ENCODE measurements at regions of chrX and their contacts with region 1.

Region 1: DNA sequence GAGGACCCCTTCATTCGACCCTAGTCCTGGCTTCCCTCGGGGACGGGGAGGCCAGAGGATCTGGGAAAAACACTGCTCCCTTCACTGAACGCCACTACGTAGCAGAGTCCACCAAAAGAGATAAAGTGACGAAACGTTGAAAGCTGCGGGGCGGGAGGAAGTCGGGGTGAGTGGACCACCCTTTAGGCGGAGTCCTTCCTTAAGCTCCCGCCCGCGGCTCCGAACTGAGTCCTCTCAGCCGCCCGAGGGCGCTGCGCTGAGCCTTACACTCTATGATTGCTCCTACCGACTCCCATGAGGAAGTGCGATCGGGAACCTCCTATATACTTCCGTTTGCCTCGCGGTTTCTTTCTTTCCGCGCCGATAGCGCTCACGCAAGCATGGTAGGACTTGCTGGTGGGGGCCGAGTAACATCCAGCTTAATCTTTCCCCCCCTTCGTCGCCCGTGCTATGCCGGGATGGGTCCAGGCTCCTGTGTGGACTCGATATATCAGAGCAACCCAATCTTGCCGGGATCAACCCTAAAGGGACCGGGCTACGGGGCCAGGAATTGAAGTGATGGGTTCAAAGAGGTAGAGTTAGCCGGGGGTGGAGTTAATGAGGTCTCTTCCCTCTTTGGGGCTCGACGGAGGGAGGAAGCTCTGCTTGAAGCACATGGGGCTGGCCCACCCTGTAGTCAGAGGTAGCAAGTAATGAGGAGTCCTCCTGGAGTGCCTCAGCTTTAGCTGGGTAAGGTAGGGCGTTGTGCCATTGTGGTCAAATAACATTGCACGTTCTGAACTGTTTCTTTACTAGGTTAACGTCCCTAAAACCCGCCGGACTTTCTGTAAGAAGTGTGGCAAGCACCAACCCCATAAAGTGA is at the start of gene RPL36A:
- DNase-seq: peak; percentile 81
- ATAC-seq: peak; percentile 98
- H3K4me3 ChIP-seq: peak within 1 kb of the TSS; percentile 68 to 84
- H3K27ac ChIP-seq: peak within 1 kb of the TSS; percentile 98
- H3K4me1 ChIP-seq: peaks cover 14% of the 10 kb centered on the region
- H3K27me3 ChIP-seq: no peaks in the 10 kb centered on the region
- CTCF ChIP-seq: peak; percentile 93
- total RNA-seq, gene RPL36A: 308 TPM

Region 2: DNA sequence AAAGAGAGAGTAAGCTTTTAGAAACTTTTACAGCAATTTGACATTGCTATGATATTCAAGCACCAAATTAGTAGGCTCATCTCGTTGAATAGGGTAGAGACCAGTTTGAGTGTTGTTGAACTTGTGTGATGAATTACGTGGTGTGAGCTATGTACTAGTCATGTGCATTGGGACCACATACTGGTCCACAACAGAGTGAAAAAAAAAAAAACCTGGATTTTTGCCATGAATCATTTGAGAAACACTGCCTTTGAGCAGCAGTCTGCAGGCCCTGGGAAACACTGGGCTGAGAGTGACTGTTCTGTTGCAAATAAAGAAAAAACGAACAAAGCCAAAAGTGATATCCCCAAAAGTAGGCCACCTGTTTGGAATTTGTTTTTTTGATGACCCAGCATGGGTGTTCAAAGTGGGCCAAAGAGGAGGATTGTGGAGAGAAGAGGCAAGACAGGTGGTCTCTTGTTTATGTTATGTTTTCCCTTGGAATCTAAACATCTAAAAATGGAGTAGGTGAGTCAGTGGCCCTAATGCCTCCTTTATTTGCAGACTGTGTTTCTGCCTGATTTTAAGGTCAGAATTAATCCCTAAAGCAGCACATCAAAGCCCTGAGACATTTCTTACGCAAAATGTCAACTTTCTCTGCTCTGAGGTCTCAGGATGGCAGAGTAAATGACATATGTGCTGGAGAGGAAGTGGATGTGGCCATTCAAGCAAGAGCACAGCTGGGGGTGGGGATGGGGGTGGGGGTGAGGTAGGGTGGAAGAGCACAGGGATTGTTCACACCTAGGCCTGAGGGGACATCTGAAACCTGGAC is 133.2 kb before region 1 on chrX:
- CTCF ChIA-PET with region 1: no interaction called
- POLR2A ChIA-PET with region 1: no interaction called
- in situ Hi-C with region 1: no loop called
- intact Hi-C with region 1: no loop called
- DNase-seq: no peak
- ATAC-seq: no peak
- H3K4me3 ChIP-seq: no peak overlapping the region
- H3K27ac ChIP-seq: no peak overlapping the region
- H3K4me1 ChIP-seq: no peaks in the 10 kb centered on the region
- H3K27me3 ChIP-seq: no peaks in the 10 kb centered on the region
- CTCF ChIP-seq: no peak

Region 3: GRCh38 chrX:101290789-101291607 is 99.9 kb before region 1 on chrX and contains the start of gene TAF7L:
- CTCF ChIA-PET with region 1: no interaction called
- POLR2A ChIA-PET with region 1: no interaction called
- in situ Hi-C with region 1: no loop called
- intact Hi-C with region 1: no loop called
- DNase-seq: no peak
- ATAC-seq: no peak
- H3K4me3 ChIP-seq: no peak within 1 kb of the TSS
- H3K27ac ChIP-seq: no peak within 1 kb of the TSS
- H3K4me1 ChIP-seq: no peaks in the 10 kb centered on the region
- H3K27me3 ChIP-seq: 0 out of 2 replicates have a peak, but pooled peaks cover 2% of the 10 kb centered on the region
- CTCF ChIP-seq: no peak
- total RNA-seq, gene TAF7L: 0.18 TPM

Region 4: DNA sequence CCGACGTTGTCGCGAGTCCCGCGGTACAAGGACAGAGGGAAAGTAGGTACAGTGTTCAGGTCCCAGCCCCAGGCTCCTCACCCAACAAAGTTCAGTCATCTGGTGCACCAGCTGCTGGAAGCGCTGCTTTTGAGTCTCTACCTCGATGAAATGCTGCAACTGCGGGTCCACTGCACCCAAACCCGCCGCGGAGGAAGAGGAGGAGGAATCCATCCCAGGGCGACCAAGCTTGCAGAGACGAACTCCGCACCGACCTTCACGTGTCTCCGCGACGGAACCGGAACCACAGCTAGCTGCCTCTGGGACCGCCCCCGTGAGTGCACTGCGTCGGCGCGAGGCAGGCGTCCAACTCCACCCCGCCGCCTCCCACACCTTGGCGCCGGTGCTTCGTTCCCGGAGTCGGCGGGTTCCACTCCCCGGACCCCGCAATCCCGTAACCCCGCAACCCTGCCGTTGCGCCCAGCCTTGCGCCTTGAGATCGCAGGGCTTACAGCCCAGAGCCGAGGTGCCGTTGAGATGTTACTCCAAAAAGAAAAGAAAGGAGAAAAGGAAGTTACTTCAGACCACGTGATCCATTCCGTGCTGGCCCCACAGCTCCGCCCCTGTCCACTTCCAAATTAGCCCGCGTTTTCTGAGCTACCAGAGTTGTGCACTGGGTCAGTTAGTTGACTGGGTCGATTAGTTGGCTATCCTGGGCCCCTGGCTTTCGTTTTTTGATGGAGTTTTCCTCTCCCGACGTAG is 42.3 kb before region 1 on chrX and contains the start of gene TIMM8A:
- CTCF ChIA-PET with region 1: no interaction called
- POLR2A ChIA-PET with region 1: interaction called, 12 read pairs
- in situ Hi-C with region 1: no loop called
- intact Hi-C with region 1: loop called (anchors 2 kb)
- DNase-seq: peak; percentile 42
- ATAC-seq: peak; percentile 99
- H3K4me3 ChIP-seq: peak within 1 kb of the TSS; percentile 70 to 96
- H3K27ac ChIP-seq: peak within 1 kb of the TSS; percentile 98
- H3K4me1 ChIP-seq: peaks cover 15% of the 10 kb centered on the region
- H3K27me3 ChIP-seq: no peaks in the 10 kb centered on the region
- CTCF ChIP-seq: no peak
- total RNA-seq, gene TIMM8A: 39.1 TPM

Region 5: DNA sequence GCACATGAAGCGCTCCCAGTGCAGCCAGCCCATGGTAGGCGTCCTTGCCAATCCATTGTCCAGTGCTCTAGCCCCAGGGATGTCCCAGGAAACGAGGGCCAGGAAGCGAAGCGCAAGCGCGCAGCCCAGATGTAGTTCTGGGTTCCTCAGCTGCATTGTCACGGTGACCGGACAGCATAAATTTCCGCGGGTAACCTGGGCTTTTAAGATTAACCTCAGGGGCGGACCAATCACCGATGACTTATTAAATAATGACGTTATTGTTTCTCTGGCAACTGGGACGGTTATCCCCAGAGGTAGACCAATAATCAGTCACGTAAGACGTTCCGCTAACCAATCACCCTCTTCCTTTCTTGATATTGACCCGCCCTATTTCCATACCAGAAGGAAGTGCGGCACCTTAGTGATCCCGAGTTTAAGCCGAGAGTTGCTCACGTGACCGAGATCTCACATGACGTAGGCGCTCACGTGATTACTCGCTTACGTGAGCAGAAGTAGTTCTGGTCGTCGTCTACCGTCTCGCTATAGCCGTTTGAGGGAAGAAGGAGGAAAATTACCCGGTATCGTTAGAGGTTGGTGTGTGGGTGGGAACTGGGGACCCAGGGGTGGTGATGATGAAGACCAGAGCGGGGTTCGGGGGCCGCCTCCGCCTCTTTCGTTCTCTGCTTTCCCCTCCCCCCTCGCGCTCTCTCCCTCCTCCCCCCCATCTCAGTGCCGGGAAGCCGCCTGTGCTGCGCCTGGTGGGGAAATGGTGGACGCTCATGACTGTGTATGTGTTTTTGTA is 17.0 kb after region 1 on chrX and contains the starts of genes GLA and HNRNPH2:
- CTCF ChIA-PET with region 1: no interaction called
- POLR2A ChIA-PET with region 1: interaction called, 14 read pairs
- in situ Hi-C with region 1: no loop called
- intact Hi-C with region 1: no loop called
- DNase-seq: peak; percentile 99
- ATAC-seq: peak; percentile 97
- H3K4me3 ChIP-seq: peak within 1 kb of the TSS; percentile 99
- H3K27ac ChIP-seq: peak within 1 kb of the TSS; percentile 87
- H3K4me1 ChIP-seq: peaks cover 12% of the 10 kb centered on the region
- H3K27me3 ChIP-seq: no peaks in the 10 kb centered on the region
- CTCF ChIP-seq: no peak
- total RNA-seq, gene GLA: 115 TPM
- total RNA-seq, gene HNRNPH2: 91.5 TPM

Measured in Panc1 (cell line).